HCT116 (cell line): ENCODE measurements at regions of chr15 and their contacts with region 1.

Region 1: DNA sequence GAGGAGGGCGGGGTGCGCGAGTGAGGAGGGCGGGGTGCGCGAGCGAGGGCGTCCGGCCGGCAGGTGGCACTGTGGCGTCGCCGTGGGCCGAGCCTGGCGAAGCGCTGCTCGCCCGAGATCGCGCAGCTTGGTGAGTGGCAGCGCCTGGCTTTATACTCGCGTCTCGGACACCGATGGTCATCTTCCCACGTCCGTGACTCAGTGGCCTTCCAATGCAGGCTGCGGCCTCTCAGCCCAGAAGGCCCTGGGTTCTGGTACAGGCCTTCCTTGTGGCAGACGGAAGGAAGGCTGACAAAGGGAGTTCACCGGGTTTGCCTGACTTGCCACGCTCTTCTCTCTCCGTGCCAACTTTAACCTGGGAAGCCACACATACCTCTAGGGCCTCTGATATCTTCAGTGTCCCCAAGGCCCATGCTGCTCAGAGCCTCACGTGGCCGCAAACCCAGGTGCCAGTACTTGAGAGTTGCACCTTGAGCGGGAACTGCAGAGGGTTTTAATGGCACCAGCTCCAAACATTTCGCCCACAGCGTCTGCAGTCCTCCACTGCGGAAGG is 195.3 kb upstream of the LYSMD4 start:
- DNase-seq: peak; percentile 42
- ATAC-seq: peak; percentile 91
- H3K4me3 ChIP-seq: peak overlapping the region; percentile 44 to 60
- H3K27ac ChIP-seq: peak overlapping the region; percentile 56
- H3K4me1 ChIP-seq: peaks cover 7 to 14% of the 10 kb centered on the region in 2 experiments; a peak in 3 of 4 replicates
- H3K27me3 ChIP-seq: no peaks in the 10 kb centered on the region
- CTCF ChIP-seq: peak; percentile 34 to 49 (median 47); a peak in 5 of 6 replicates
- POLR2A ChIP-seq: no peak
- RAD21 ChIP-seq: peak; percentile 81

Region 2: DNA sequence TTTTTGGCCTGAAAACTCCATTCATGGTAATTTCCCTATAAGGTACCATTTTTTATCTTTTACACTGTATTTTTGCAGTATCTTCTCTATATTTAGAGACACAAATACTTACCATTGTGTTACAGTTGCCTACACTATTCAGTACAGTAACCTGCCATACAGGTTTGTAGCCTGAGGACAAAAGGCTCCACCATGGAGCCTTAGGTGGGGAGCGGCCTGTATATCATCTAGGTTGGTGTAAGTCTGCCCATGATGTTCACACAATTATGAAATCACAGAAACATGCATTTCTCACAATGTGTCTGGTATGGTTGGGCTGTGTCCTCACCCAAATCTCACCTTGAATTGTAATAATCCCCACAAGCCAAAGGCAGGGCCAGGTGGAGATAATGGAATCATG is 151.4 kb before region 1 on chr15:
- CTCF ChIA-PET with region 1: no interaction called
- POLR2A ChIA-PET with region 1: no interaction called
- RAD21 ChIA-PET with region 1: no interaction called
- intact Hi-C with region 1: no loop called
- DNase-seq: no peak
- ATAC-seq: no peak
- H3K4me3 ChIP-seq: no peak overlapping the region
- H3K27ac ChIP-seq: no peak overlapping the region
- H3K4me1 ChIP-seq: no peaks in the 10 kb centered on the region
- H3K27me3 ChIP-seq: peaks cover 3% of the 10 kb centered on the region; the same call in 1 of the 2 replicates
- CTCF ChIP-seq: no peak
- POLR2A ChIP-seq: no peak
- RAD21 ChIP-seq: no peak

Region 3: DNA sequence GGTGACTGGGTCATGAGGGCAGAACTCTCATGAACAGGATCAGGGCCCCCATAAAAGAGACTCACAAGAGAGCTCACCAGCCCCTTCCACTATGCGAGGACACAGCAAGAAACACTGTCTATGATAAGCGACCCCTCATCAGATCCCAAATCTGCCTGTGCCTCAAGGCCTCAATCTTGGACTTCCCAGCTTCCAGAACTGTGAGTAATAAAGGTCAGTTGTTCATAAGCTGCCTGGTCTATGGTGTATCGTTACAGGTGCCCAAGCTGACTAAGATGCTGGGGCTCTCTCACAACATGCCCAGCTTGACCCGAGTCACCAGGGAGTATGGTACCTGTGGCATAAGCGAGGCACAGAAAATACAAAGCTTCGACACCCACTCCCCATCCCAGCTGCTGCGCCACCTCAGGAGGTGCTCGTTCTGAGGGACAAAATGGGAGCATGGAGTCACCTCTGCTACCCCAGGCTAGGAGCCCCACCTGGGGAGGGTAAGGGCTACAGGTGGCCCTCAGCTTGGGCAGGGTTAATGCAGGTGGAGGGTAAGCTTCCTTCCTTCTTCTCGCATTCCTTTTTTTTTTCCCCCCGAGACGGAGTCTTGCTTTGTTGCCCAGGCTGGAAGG is 179.2 kb after region 1 on chr15:
- CTCF ChIA-PET with region 1: no interaction called
- POLR2A ChIA-PET with region 1: no interaction called
- RAD21 ChIA-PET with region 1: no interaction called
- intact Hi-C with region 1: no loop called
- DNase-seq: no peak
- ATAC-seq: no peak
- H3K4me3 ChIP-seq: no peak overlapping the region
- H3K27ac ChIP-seq: no peak overlapping the region
- H3K4me1 ChIP-seq: peaks cover 18 to 22% of the 10 kb centered on the region in 2 experiments
- H3K27me3 ChIP-seq: no peaks in the 10 kb centered on the region
- CTCF ChIP-seq: no peak
- POLR2A ChIP-seq: no peak
- RAD21 ChIP-seq: no peak

Region 4: DNA sequence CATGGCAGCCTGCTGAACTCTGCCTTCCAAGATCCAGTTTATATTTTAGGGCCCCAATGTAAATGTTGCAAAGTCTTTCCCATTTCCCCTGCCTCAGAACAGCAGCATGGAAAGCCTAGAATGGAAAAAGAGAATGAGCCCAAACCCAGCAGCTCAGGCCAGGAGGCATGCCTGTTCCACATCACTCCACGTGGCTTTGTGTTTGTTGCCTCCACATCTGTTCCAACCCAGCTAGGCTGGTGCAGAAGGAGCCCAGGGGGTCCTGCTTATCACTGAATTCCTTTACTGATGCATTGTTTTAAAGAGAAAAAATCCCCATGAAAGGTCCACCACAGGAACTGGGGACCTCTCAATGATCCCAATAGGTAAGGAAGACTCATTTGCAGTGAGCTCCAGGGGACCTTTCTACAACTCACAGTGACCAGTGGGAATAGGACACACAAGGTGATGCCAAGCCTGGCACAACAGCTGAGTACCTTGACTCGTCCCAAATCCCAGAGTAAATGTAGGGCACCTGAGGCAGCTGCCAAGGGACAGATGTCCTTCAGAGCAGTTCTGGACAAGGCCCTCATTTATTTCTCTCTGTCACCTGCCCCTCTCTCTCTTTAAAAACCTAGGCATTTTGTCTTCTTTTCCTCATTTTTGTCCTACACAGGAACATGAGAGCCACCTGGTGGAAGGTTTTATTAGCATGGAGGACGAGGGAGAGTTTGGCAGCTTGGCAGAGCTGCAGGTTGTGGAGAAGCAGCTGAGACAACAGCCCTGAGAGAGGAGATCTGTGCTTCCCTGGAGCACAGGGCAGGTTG is 455.0 kb after region 1 on chr15:
- CTCF ChIA-PET with region 1: no interaction called
- POLR2A ChIA-PET with region 1: no interaction called
- RAD21 ChIA-PET with region 1: interaction called in 1 of 2 experiments, 4 read pairs
- intact Hi-C with region 1: loop called (anchors 5 kb)
- DNase-seq: peak; percentile 8
- ATAC-seq: peak; percentile 78
- H3K4me3 ChIP-seq: no peak overlapping the region
- H3K27ac ChIP-seq: no peak overlapping the region
- H3K4me1 ChIP-seq: no peaks in the 10 kb centered on the region
- H3K27me3 ChIP-seq: no peaks in the 10 kb centered on the region
- CTCF ChIP-seq: peak; percentile 49 to 62 (median 54)
- POLR2A ChIP-seq: no peak
- RAD21 ChIP-seq: peak; percentile 67

Region 5: GRCh38 chr15:100572362-100572983 is 644.0 kb after region 1 on chr15:
- CTCF ChIA-PET with region 1: no interaction called
- POLR2A ChIA-PET with region 1: no interaction called
- RAD21 ChIA-PET with region 1: no interaction called
- intact Hi-C with region 1: loop called (anchors 10 kb)
- DNase-seq: no peak
- ATAC-seq: no peak
- H3K4me3 ChIP-seq: no peak overlapping the region
- H3K27ac ChIP-seq: no peak overlapping the region
- H3K4me1 ChIP-seq: no peaks in the 10 kb centered on the region
- H3K27me3 ChIP-seq: no peaks in the 10 kb centered on the region
- CTCF ChIP-seq: peak; percentile 9 to 58 (median 28); a peak in 3 of 6 replicates
- POLR2A ChIP-seq: no peak
- RAD21 ChIP-seq: peak; percentile 28; the same call in 1 of the 2 replicates

Region 6: GRCh38 chr15:100602064-100602822 is 673.7 kb after region 1 on chr15 and contains the starts of genes ASB7 and LINS1:
- CTCF ChIA-PET with region 1: interaction called, 3 read pairs
- POLR2A ChIA-PET with region 1: no interaction called
- RAD21 ChIA-PET with region 1: no interaction called
- intact Hi-C with region 1: loop called (anchors 10 kb)
- DNase-seq: peak; percentile 100
- ATAC-seq: peak; percentile 94
- H3K4me3 ChIP-seq: peak within 1 kb of the TSS; percentile 73 to 98
- H3K27ac ChIP-seq: peak within 1 kb of the TSS; percentile 62
- H3K4me1 ChIP-seq: peaks cover 14 to 16% of the 10 kb centered on the region in 2 experiments
- H3K27me3 ChIP-seq: no peaks in the 10 kb centered on the region
- CTCF ChIP-seq: no peak
- POLR2A ChIP-seq: peak; percentile 32
- RAD21 ChIP-seq: no peak
- total RNA-seq, gene ASB7: 16.6 TPM
- total RNA-seq, gene LINS1: 14.7 TPM